Lower leg skin (tissue), 4 donors: ENCODE measurements at regions of chr10 and their contacts with region 1.

Region 1: GRCh38 chr10:43221419-43222209 is 45.3 kb downstream of the RASGEF1A start:
- DNase-seq: peak in 1 of 2 donors; percentile 82
- H3K4me3 ChIP-seq: no peak overlapping the region
- CTCF ChIP-seq: no peak
- POLR2A ChIP-seq: no peak

Region 2: GRCh38 chr10:43039624-43040481 is 181.8 kb before region 1 on chr10:
- intact Hi-C with region 1: loop called (anchors 10 kb)
- DNase-seq: peak in 1 of 2 donors; percentile 75
- H3K4me3 ChIP-seq: no peak overlapping the region
- CTCF ChIP-seq: no peak
- POLR2A ChIP-seq: no peak

Region 3: GRCh38 chr10:43491855-43492254 is 270.2 kb after region 1 on chr10:
- intact Hi-C with region 1: no loop called
- DNase-seq: no peak
- H3K4me3 ChIP-seq: no peak overlapping the region
- CTCF ChIP-seq: no peak
- POLR2A ChIP-seq: no peak